ENCODE measurements at regions of chrX and their contacts with region 1.

Region 1: GRCh38 chrX:101595739-101596419 is 21.9 kb downstream of the ARMCX6 start:
- H3K4me3 Mint-ChIP-seq: no peak overlapping the region
- H3K27ac Mint-ChIP-seq: no peak overlapping the region
- H3K4me1 Mint-ChIP-seq: peaks cover 9% of the 10 kb centered on the region
- H3K27me3 Mint-ChIP-seq: peaks cover 8% of the 10 kb centered on the region

Region 2: DNA sequence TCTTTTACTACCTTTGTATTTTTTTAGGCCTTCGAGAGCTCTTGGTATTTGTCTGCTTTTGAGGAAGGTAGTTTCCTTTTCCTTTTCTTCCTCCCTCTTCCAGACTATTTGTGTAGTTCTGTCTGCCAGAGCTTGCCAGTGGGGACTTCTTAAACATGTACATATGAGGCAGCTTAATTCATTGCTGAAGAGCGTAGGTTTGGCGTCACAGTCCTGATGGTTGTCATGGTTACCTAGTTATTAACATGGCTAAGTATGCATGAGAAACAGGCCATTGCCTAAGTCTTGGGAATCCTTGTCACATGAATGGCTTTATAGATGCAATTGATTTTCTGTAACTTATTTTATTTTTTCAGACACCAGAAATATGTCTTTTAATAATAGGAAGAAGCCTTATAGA is 112.3 kb after region 1 on chrX:
- intact Hi-C with region 1: no loop called
- H3K4me3 Mint-ChIP-seq: no peak overlapping the region
- H3K27ac Mint-ChIP-seq: no peak overlapping the region
- H3K4me1 Mint-ChIP-seq: no peaks in the 10 kb centered on the region
- H3K27me3 Mint-ChIP-seq: no peaks in the 10 kb centered on the region

Region 3: DNA sequence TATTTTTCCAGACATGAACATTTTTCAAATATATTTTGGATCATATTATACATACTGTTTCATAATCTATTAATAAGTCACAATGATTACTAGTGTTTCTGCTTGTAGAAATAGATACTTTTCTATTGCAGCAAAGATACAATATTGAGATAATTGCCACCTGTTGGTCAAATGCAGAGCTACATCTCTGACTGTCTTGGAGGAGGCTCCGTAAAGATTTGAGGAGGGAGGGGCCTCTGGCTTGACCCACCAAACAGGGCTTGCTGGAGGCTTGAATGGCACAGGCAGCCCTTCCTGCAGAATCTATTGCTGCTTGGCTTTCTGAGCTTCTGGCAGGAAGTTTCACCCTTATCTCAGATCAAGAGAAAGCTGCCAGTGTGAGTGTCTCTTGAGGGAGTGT is 163.1 kb after region 1 on chrX:
- intact Hi-C with region 1: loop called (anchors 5 kb)
- H3K4me3 Mint-ChIP-seq: no peak overlapping the region
- H3K27ac Mint-ChIP-seq: no peak overlapping the region
- H3K4me1 Mint-ChIP-seq: no peaks in the 10 kb centered on the region
- H3K27me3 Mint-ChIP-seq: no peaks in the 10 kb centered on the region

Region 4: DNA sequence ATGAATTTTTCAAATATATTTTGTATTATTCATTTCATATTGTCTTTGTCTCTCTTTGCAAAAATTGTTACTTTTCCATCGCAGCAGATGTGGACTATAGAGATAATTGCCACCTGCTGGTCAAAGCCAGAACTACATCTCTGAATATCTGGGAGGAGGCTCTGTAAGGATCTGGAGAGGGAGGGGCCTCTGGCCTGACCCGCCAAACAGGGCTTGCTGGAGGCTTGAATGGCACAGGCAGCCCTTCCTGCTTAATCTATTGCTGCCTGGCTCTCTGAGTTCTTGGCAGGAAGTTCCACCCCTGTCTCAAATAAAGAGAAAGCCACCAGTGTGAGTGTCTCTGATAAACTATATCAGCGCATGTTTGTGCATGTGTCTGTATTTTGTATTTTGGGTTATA is 203.5 kb after region 1 on chrX:
- intact Hi-C with region 1: loop called (anchors 5 kb)
- H3K4me3 Mint-ChIP-seq: no peak overlapping the region
- H3K27ac Mint-ChIP-seq: no peak overlapping the region
- H3K4me1 Mint-ChIP-seq: no peaks in the 10 kb centered on the region
- H3K27me3 Mint-ChIP-seq: no peaks in the 10 kb centered on the region

Measured in dendritic cell treated with granulocyte-macrophage colony-stimulating factor and Interleukin-4, amounts not matched to agents 40 ng/mL and 50 ng/mL, for 4 days (primary cell).